CD14-positive monocyte (primary cell): ENCODE measurements at regions of chr16 and their contacts with region 1.

Region 1: DNA sequence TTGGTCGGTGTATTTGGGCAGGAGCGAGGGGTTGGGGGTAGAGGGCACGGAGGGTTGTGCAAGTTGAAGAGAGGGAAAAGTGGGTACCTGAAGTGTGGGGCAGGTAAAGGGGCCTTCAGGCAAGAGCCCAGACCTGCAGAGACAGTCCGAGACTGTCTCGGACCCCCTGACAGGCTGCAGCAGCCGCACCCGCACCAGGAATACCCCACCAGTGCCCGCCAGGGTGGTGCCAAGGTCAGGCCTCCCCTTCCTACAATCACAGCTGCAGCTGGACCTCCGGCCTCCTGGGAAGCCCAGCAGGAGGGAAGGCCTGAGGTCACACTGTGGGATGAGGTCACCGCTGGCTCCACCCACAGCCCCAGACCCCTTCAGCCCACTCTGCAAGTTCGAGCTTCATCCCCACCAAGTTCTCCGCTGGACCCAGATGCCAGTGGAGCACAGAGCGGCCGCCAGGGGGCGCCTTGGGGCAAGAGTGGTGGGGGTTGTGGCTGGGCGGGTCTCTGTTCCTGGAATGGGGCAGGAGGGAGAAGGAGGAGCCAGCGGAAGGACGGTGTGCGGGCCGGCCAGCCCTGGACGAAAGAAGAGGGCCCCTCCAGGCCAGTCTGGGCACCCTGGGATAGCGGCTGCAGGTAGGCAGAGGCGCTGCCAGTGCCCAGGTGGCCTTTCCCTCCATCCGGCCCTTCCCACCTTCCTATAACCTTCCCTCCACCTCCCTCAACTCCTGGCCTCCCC is at the start of gene HSD3B7:
- DNase-seq: peak; percentile 67 to 77 (median 74)
- H3K4me3 ChIP-seq: peak within 1 kb of the TSS in 1 of 3 experiments; percentile 38
- H3K4me3 Mint-ChIP-seq: peak within 1 kb of the TSS in 1 of 2 donors; percentile 57
- H3K27ac ChIP-seq: no peak within 1 kb of the TSS
- H3K27ac Mint-ChIP-seq: peak within 1 kb of the TSS in 4 of 7 donors; percentile 3 to 61 (median 32)
- H3K4me1 ChIP-seq: peaks cover 8 to 19% of the 10 kb centered on the region in 2 donors
- H3K4me1 Mint-ChIP-seq: peaks cover 4% of the 10 kb centered on the region
- H3K27me3 ChIP-seq: no peaks in the 10 kb centered on the region
- H3K27me3 Mint-ChIP-seq: peaks cover 0 to 2% (median 0%) of the 10 kb centered on the region in 3 donors
- CTCF ChIP-seq: peak; percentile 96
- polyA plus RNA-seq, gene HSD3B7: 0.89 to 4.3 (median 2.7) TPM

Region 2: GRCh38 chr16:30867747-30868146 is 117.1 kb before region 1 on chr16:
- intact Hi-C with region 1: no loop called
- DNase-seq: no peak
- H3K4me3 ChIP-seq: no peak overlapping the region
- H3K4me3 Mint-ChIP-seq: no peak overlapping the region
- H3K27ac ChIP-seq: no peak overlapping the region
- H3K27ac Mint-ChIP-seq: no peak overlapping the region
- H3K4me1 ChIP-seq: no peaks in the 10 kb centered on the region
- H3K4me1 Mint-ChIP-seq: no peaks in the 10 kb centered on the region
- H3K27me3 ChIP-seq: no peaks in the 10 kb centered on the region
- H3K27me3 Mint-ChIP-seq: no peaks in the 10 kb centered on the region
- CTCF ChIP-seq: no peak

Region 3: DNA sequence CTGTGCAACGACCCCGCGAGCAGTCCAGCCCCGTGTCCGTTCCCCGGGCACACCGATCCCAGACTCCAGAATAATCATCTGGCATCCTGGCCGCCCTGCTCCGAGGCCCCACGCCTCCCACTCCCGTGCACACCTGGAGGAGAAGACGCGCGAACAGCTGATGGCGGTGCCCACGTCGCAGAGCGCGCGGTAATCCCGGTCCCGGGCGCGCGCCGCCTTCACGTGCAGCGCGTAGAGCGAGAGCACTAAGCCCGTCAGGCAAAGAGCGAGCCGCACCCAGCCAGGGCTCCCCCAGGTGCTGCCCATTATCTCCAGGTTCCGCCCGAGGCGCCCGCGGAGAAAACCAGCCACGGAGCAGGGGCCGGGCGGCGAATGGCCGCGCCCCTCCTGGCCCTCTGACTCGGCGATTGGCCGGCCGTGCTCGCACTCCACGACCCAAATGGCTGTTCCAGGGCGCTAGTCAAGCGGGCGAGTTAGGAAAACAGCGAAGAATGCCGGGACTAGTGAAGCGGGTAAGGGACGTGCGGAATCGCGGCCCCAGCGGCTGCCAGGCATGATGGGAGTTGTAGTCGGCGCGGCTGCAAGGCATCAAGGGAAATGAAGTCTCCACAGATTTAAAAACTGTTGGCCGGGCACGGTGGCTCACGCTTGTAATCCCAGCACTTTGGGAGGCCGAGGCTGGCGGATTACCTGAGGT is 109.7 kb after region 1 on chr16 and contains the start of gene VKORC1:
- intact Hi-C with region 1: loop called (anchors 1 to 2 kb)
- DNase-seq: peak; percentile 92 to 94 (median 93)
- H3K4me3 ChIP-seq: peak within 1 kb of the TSS; percentile 49 to 92 (median 92)
- H3K4me3 Mint-ChIP-seq: peak within 1 kb of the TSS; percentile 89 to 98
- H3K27ac ChIP-seq: peak within 1 kb of the TSS; percentile 52 to 74
- H3K27ac Mint-ChIP-seq: peak within 1 kb of the TSS; percentile 66 to 92 (median 86)
- H3K4me1 ChIP-seq: peaks cover 25 to 29% of the 10 kb centered on the region in 2 donors
- H3K4me1 Mint-ChIP-seq: peaks cover 21% of the 10 kb centered on the region
- H3K27me3 ChIP-seq: no peaks in the 10 kb centered on the region
- H3K27me3 Mint-ChIP-seq: peaks cover 0 to 4% (median 1%) of the 10 kb centered on the region in 3 donors
- CTCF ChIP-seq: no peak
- polyA plus RNA-seq, gene VKORC1: 59.2 to 113 (median 91.2) TPM

Region 4: GRCh38 chr16:31157136-31157535 is 172.3 kb after region 1 on chr16:
- intact Hi-C with region 1: loop called (anchors 10 kb)
- DNase-seq: peak; percentile 57 to 66 (median 59)
- H3K4me3 ChIP-seq: no peak overlapping the region
- H3K4me3 Mint-ChIP-seq: peak overlapping the region in 1 of 2 donors; percentile 78
- H3K27ac ChIP-seq: no peak overlapping the region
- H3K27ac Mint-ChIP-seq: peak overlapping the region in 4 of 7 donors; percentile 33 to 80 (median 53)
- H3K4me1 ChIP-seq: peaks cover 9% of the 10 kb centered on the region in 2 donors
- H3K4me1 Mint-ChIP-seq: peaks cover 11% of the 10 kb centered on the region
- H3K27me3 ChIP-seq: no peaks in the 10 kb centered on the region
- H3K27me3 Mint-ChIP-seq: peaks cover 3 to 5% (median 4%) of the 10 kb centered on the region in 3 donors
- CTCF ChIP-seq: no peak

Region 5: DNA sequence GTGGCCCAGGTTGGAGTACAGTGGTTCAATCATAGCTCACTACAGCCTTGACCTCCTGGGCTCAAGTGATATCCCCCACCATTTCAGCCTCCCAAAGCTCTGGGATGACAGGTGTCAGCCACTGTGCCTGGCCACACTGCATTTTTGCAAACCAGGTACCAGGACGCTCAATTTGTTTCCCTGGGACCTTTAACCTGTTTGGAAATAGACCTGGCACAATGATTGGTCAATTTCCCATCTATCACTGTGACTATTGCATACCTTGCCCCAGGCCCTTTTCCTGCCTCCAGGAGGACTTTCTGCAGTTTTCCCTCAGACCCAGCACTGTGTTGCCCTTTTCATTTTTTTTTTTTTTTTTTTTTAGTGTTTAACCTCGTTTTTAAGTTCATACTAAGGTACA is 184.0 kb after region 1 on chr16:
- intact Hi-C with region 1: loop called in 1 of 2 experiments (anchors 10 kb)
- DNase-seq: no peak
- H3K4me3 ChIP-seq: no peak overlapping the region
- H3K4me3 Mint-ChIP-seq: no peak overlapping the region
- H3K27ac ChIP-seq: no peak overlapping the region
- H3K27ac Mint-ChIP-seq: no peak overlapping the region
- H3K4me1 ChIP-seq: no peaks in the 10 kb centered on the region
- H3K4me1 Mint-ChIP-seq: peaks cover 6% of the 10 kb centered on the region
- H3K27me3 ChIP-seq: no peaks in the 10 kb centered on the region
- H3K27me3 Mint-ChIP-seq: peaks cover 0 to 5% (median 5%) of the 10 kb centered on the region in 3 donors
- CTCF ChIP-seq: no peak

Region 6: DNA sequence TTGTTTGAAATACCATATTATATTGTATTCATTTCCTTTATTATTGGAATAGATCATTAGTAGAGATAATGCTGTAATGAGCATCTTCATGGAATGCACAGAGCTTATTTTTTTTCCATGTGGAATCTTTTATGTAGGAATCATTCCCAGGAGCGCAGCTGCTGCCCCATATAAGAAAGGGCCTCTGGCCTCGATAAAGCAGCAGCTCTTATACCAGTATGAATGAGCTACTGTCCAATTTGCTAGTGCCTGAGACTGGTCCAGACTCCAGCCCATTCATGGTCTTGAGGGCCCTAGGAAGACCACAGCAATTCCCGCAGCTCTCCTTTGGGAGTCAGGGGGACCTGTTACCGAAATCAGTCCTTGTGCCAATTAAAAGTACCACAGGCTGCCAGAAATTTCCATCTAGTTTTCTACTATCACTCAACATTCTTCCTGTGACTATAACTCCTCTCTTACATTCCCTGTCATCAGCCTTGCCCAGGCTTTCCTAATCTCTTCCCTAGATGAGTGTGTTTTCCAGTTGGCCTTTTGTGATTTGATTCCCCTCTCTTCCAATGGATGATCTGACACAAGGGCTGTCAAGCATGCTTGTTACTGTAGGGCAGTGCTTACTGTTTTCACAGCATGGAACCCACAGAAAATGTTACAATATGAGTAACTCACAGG is 455.8 kb after region 1 on chr16:
- intact Hi-C with region 1: loop called (anchors 5 kb)
- DNase-seq: no peak
- H3K4me3 ChIP-seq: no peak overlapping the region
- H3K4me3 Mint-ChIP-seq: no peak overlapping the region
- H3K27ac ChIP-seq: no peak overlapping the region
- H3K27ac Mint-ChIP-seq: no peak overlapping the region
- H3K4me1 ChIP-seq: peaks cover 0 to 4% of the 10 kb centered on the region in 2 donors
- H3K4me1 Mint-ChIP-seq: peaks cover 6% of the 10 kb centered on the region
- H3K27me3 ChIP-seq: no peaks in the 10 kb centered on the region
- H3K27me3 Mint-ChIP-seq: peaks cover 2 to 10% (median 4%) of the 10 kb centered on the region in 3 donors
- CTCF ChIP-seq: no peak

Region 7: GRCh38 chr16:31868691-31869167 is 883.9 kb after region 1 on chr16:
- intact Hi-C with region 1: loop called in 1 of 2 experiments (anchors 10 kb)
- DNase-seq: peak; percentile 78 to 82 (median 82)
- H3K4me3 ChIP-seq: peak overlapping the region; percentile 10 to 74 (median 48)
- H3K4me3 Mint-ChIP-seq: peak overlapping the region; percentile 64 to 75
- H3K27ac ChIP-seq: peak overlapping the region; percentile 99 to 100
- H3K27ac Mint-ChIP-seq: peak overlapping the region; percentile 97 to 100 (median 99)
- H3K4me1 ChIP-seq: peaks cover 29 to 49% of the 10 kb centered on the region in 2 donors
- H3K4me1 Mint-ChIP-seq: peaks cover 38% of the 10 kb centered on the region
- H3K27me3 ChIP-seq: no peaks in the 10 kb centered on the region
- H3K27me3 Mint-ChIP-seq: peaks cover 0 to 3% (median 2%) of the 10 kb centered on the region in 3 donors
- CTCF ChIP-seq: peak; percentile 91